ENCODE measurements at regions of chr16 and their contacts with region 1.

Region 1: GRCh38 chr16:66872943-66873684 is 7.2 kb upstream of the PDP2 start:
- DNase-seq: peak; percentile 95
- ATAC-seq: peak; percentile 89
- H3K4me3 ChIP-seq: peak overlapping the region; percentile 65; the same call in 1 of the 2 replicates
- H3K27ac ChIP-seq: peak overlapping the region; percentile 9; the same call in 1 of the 2 replicates
- H3K4me1 ChIP-seq: peaks cover 20% of the 10 kb centered on the region
- H3K27me3 ChIP-seq: no peaks in the 10 kb centered on the region
- CTCF ChIP-seq: peak; percentile 91 to 96 (median 93)
- EP300 ChIP-seq: peak in 1 of 2 experiments; percentile 46; a peak in 1 of 4 replicates
- POLR2A ChIP-seq: peak; percentile 37; the same call in 1 of the 2 replicates
- RAD21 ChIP-seq: peak; percentile 16; the same call in 1 of the 2 replicates

Region 2: GRCh38 chr16:66154801-66155200 is 718.3 kb before region 1 on chr16:
- CTCF ChIA-PET with region 1: no interaction called
- POLR2A ChIA-PET with region 1: no interaction called
- RAD21 ChIA-PET with region 1: no interaction called
- SMC1A ChIA-PET with region 1: no interaction called
- in situ Hi-C with region 1: no loop called
- intact Hi-C with region 1: no loop called
- DNase-seq: no peak
- ATAC-seq: no peak
- H3K4me3 ChIP-seq: no peak overlapping the region
- H3K27ac ChIP-seq: no peak overlapping the region
- H3K4me1 ChIP-seq: no peaks in the 10 kb centered on the region
- H3K27me3 ChIP-seq: no peaks in the 10 kb centered on the region; a peak in 1 of 4 replicates
- CTCF ChIP-seq: no peak
- EP300 ChIP-seq: no peak
- POLR2A ChIP-seq: no peak
- RAD21 ChIP-seq: no peak

Region 3: GRCh38 chr16:66562407-66562806 is 310.7 kb before region 1 on chr16:
- CTCF ChIA-PET with region 1: interaction called, 16 read pairs
- POLR2A ChIA-PET with region 1: no interaction called
- RAD21 ChIA-PET with region 1: no interaction called
- SMC1A ChIA-PET with region 1: interaction called, 5 read pairs
- in situ Hi-C with region 1: no loop called
- intact Hi-C with region 1: no loop called
- DNase-seq: no peak
- ATAC-seq: peak; percentile 19; the same call in 1 of the 3 replicates
- H3K4me3 ChIP-seq: no peak overlapping the region
- H3K27ac ChIP-seq: no peak overlapping the region
- H3K4me1 ChIP-seq: no peaks in the 10 kb centered on the region
- H3K27me3 ChIP-seq: no peaks in the 10 kb centered on the region
- CTCF ChIP-seq: no peak; a peak in 1 of 6 replicates
- EP300 ChIP-seq: no peak
- POLR2A ChIP-seq: no peak
- RAD21 ChIP-seq: peak; percentile 32

Region 4: DNA sequence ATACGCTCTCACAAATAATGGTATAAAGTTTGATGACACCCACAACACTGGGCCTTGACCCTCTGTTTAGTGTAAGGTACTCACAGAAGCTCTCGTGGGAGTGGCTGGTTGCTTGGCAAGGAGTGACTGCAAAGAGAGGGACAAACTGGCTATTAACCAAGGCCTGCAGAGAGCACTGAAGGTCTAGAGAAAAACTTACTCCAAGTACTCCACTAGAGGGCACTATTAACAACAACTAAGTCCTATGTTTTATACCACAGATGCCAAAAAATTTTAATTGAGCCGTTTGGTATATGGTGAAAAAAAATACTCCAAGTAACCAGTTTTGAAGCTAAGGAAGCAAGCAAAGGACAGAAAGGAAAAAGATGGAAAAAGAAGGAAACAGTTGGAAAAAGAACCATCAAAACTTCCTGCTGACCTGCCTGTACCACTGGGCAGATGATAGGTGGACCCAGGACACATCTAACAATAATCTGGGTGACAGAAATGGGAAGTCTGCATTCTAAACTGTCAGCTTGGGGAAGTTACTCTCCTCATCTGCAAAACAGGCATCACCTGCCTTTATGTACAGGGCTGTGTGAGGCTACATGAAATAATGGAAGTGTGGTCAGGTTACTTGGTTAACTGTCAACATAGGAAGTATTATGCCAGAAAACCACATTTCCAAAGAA is 144.9 kb before region 1 on chr16:
- CTCF ChIA-PET with region 1: interaction called, 54 read pairs
- POLR2A ChIA-PET with region 1: no interaction called
- RAD21 ChIA-PET with region 1: interaction called, 9 read pairs
- SMC1A ChIA-PET with region 1: interaction called, 17 read pairs
- in situ Hi-C with region 1: no loop called
- intact Hi-C with region 1: loop called (anchors 2 kb)
- DNase-seq: no peak
- ATAC-seq: peak; percentile 97
- H3K4me3 ChIP-seq: no peak overlapping the region
- H3K27ac ChIP-seq: no peak overlapping the region
- H3K4me1 ChIP-seq: no peaks in the 10 kb centered on the region
- H3K27me3 ChIP-seq: no peaks in the 10 kb centered on the region
- CTCF ChIP-seq: peak; percentile 37 to 63 (median 59); a peak in 5 of 6 replicates
- EP300 ChIP-seq: no peak
- POLR2A ChIP-seq: no peak
- RAD21 ChIP-seq: peak; percentile 47

Region 5: DNA sequence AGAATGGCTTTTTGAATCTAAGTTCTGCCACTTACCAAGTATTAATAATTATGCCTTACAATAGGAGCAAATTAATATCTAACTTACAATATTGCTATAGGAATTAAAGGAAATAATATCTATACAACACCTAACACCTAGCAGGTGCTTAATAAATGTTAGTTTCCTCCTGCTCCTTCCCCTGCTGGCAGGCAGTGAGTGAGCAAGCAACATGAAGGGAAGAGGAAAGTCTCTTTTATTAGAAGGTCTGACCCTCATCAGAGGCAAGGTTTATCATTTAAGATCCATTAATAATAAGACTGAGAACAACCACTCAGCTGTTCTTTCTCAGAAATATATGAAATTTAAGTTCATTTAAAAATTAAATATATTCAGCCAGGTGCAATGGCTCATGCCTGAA is 115.0 kb before region 1 on chr16:
- CTCF ChIA-PET with region 1: interaction called, 12 read pairs
- POLR2A ChIA-PET with region 1: no interaction called
- RAD21 ChIA-PET with region 1: interaction called, 3 read pairs
- SMC1A ChIA-PET with region 1: no interaction called
- in situ Hi-C with region 1: no loop called
- intact Hi-C with region 1: no loop called
- DNase-seq: no peak
- ATAC-seq: no peak
- H3K4me3 ChIP-seq: no peak overlapping the region
- H3K27ac ChIP-seq: no peak overlapping the region
- H3K4me1 ChIP-seq: no peaks in the 10 kb centered on the region
- H3K27me3 ChIP-seq: peaks cover 0 to 3% of the 10 kb centered on the region in 2 experiments; a peak in 1 of 4 replicates
- CTCF ChIP-seq: peak in 1 of 3 experiments; percentile 20; a peak in 1 of 6 replicates
- EP300 ChIP-seq: no peak
- POLR2A ChIP-seq: no peak
- RAD21 ChIP-seq: no peak

Region 6: DNA sequence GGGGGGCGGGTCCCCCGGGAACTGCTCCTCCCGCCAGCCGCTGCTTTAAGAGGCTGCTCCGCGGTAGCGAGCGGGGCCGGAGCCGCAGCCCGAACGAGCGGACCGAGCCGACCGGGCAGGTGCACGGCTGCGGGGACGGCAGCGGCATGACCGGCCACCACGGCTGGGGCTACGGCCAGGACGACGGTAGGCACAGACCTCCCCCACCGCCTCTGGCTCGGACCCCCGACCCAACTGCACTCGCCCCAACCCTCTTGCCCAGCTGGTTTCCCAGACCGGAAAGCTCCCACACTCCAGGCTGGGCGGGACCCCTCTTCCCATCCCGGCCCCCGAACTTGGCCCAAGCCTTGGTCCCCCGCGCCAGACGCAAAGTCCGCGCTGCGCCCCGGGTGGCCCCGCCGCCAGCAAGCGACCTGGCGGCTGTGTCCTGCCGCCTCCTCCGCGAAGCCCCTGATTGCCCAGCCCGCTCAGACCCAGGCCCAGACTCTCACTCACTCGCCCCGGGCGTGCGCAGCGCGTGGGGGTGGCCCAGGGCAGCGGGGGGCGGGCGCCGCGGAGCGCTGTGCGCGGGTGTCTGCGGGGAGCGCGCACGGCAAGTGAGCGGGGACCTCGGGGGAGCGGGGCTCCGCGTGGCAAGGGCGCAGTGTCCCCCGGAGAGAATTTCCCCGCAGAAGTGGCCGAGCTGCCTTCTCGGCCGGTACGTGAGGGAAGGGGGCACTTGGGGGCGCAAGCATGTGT is 28.6 kb before region 1 on chr16 and contains the start of gene CA7:
- CTCF ChIA-PET with region 1: interaction called, 73 read pairs
- POLR2A ChIA-PET with region 1: interaction called, 4 read pairs
- RAD21 ChIA-PET with region 1: interaction called, 3 read pairs
- SMC1A ChIA-PET with region 1: interaction called, 4 read pairs
- in situ Hi-C with region 1: no loop called
- intact Hi-C with region 1: no loop called
- DNase-seq: no peak
- ATAC-seq: no peak; the same call in 2 of the 3 replicates
- H3K4me3 ChIP-seq: no peak within 1 kb of the TSS
- H3K27ac ChIP-seq: no peak within 1 kb of the TSS
- H3K4me1 ChIP-seq: no peaks in the 10 kb centered on the region
- H3K27me3 ChIP-seq: peaks cover 4 to 10% of the 10 kb centered on the region in 2 experiments; a peak in 3 of 4 replicates
- CTCF ChIP-seq: no peak
- EP300 ChIP-seq: no peak
- POLR2A ChIP-seq: no peak
- RAD21 ChIP-seq: no peak
- polyA plus RNA-seq, gene CA7: 0.04 TPM in 1 of 2 experiments, not detected in the other

Region 7: DNA sequence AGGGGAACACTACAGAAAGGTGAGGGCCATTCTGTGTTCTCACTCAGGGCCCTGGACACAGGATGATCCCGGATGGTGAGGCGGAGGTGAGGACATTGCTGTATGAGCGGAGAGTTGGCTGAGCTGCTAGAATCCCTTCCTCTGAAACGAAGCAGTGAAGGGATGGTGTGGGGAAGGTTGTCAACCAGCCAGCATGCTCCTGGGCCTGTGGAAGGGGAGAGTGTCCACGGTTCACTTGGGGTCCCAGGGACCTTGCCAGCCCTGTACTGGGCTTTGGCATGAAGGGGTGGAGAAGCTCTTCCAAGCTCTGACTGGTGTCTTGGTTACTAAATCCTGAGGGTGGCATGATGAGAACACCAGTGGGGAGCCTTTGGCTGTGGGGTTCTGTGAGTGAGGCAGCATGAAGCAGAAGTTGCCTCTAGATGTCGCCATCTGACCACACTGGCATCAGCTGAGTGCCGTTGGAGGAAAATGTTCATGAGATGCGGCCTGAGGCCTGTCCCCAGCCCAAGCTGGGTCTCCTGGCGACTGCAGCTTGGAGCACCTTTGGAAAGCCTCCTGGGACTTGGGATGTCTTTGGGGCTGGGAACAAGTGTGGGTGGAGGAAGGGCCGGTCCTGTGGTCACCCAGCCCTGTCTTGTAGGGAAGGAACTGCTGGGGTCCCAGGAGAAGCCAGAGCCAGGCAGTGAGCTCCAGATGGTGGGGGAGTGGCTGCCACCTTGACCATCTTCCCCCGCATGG is 22.0 kb after region 1 on chr16:
- CTCF ChIA-PET with region 1: interaction called, 12 read pairs
- POLR2A ChIA-PET with region 1: no interaction called
- RAD21 ChIA-PET with region 1: interaction called, 7 read pairs
- SMC1A ChIA-PET with region 1: interaction called, 4 read pairs
- in situ Hi-C with region 1: no loop called
- intact Hi-C with region 1: no loop called
- DNase-seq: no peak
- ATAC-seq: peak; percentile 98
- H3K4me3 ChIP-seq: no peak overlapping the region
- H3K27ac ChIP-seq: no peak overlapping the region
- H3K4me1 ChIP-seq: no peaks in the 10 kb centered on the region; the same call in 1 of the 2 replicates
- H3K27me3 ChIP-seq: no peaks in the 10 kb centered on the region
- CTCF ChIP-seq: peak; percentile 86 to 95 (median 91); a peak in 5 of 6 replicates
- EP300 ChIP-seq: no peak
- POLR2A ChIP-seq: no peak
- RAD21 ChIP-seq: peak; percentile 89

Region 8: GRCh38 chr16:67006930-67007658 is 134.0 kb after region 1 on chr16:
- CTCF ChIA-PET with region 1: no interaction called
- POLR2A ChIA-PET with region 1: no interaction called
- RAD21 ChIA-PET with region 1: no interaction called
- SMC1A ChIA-PET with region 1: no interaction called
- in situ Hi-C with region 1: no loop called
- intact Hi-C with region 1: no loop called
- DNase-seq: no peak
- ATAC-seq: no peak
- H3K4me3 ChIP-seq: no peak overlapping the region
- H3K27ac ChIP-seq: no peak overlapping the region
- H3K4me1 ChIP-seq: no peaks in the 10 kb centered on the region
- H3K27me3 ChIP-seq: no peaks in the 10 kb centered on the region; a peak in 1 of 4 replicates
- CTCF ChIP-seq: no peak
- EP300 ChIP-seq: no peak
- POLR2A ChIP-seq: no peak
- RAD21 ChIP-seq: no peak